Left ventricle myocardium inferior (tissue), 1 donor: ENCODE measurements at regions of chr1 and their contacts with region 1.

Region 1: GRCh38 chr1:9494929-9495758 is 44.1 kb upstream of the SLC25A33 start:
- DNase-seq: peak; percentile 47
- H3K4me3 ChIP-seq: peak overlapping the region; percentile 52
- H3K27ac ChIP-seq: no peak overlapping the region
- H3K4me1 ChIP-seq: peaks cover 11% of the 10 kb centered on the region
- H3K27me3 ChIP-seq: peaks cover 17% of the 10 kb centered on the region
- CTCF ChIP-seq: peak; percentile 98

Region 2: GRCh38 chr1:8970870-8971337 is 524.2 kb before region 1 on chr1:
- intact Hi-C with region 1: no loop called
- DNase-seq: no peak
- H3K4me3 ChIP-seq: no peak overlapping the region
- H3K27ac ChIP-seq: no peak overlapping the region
- H3K4me1 ChIP-seq: no peaks in the 10 kb centered on the region
- H3K27me3 ChIP-seq: no peaks in the 10 kb centered on the region
- CTCF ChIP-seq: no peak

Region 3: GRCh38 chr1:9289090-9289534 is 206.0 kb before region 1 on chr1:
- intact Hi-C with region 1: loop called (anchors 5 kb)
- DNase-seq: peak; percentile 48
- H3K4me3 ChIP-seq: no peak overlapping the region
- H3K27ac ChIP-seq: peak overlapping the region; percentile 79
- H3K4me1 ChIP-seq: peaks cover 41% of the 10 kb centered on the region
- H3K27me3 ChIP-seq: no peaks in the 10 kb centered on the region
- CTCF ChIP-seq: peak; percentile 90

Region 4: GRCh38 chr1:9438431-9439073 is 56.6 kb before region 1 on chr1:
- intact Hi-C with region 1: no loop called
- DNase-seq: peak; percentile 37
- H3K4me3 ChIP-seq: no peak overlapping the region
- H3K27ac ChIP-seq: peak overlapping the region; percentile 91
- H3K4me1 ChIP-seq: peaks cover 76% of the 10 kb centered on the region
- H3K27me3 ChIP-seq: no peaks in the 10 kb centered on the region
- CTCF ChIP-seq: no peak

Region 5: GRCh38 chr1:9573723-9574122 is 78.6 kb after region 1 on chr1:
- intact Hi-C with region 1: loop called (anchors 10 kb)
- DNase-seq: no peak
- H3K4me3 ChIP-seq: no peak overlapping the region
- H3K27ac ChIP-seq: no peak overlapping the region
- H3K4me1 ChIP-seq: peaks cover 5% of the 10 kb centered on the region
- H3K27me3 ChIP-seq: no peaks in the 10 kb centered on the region
- CTCF ChIP-seq: peak; percentile 54

Region 6: DNA sequence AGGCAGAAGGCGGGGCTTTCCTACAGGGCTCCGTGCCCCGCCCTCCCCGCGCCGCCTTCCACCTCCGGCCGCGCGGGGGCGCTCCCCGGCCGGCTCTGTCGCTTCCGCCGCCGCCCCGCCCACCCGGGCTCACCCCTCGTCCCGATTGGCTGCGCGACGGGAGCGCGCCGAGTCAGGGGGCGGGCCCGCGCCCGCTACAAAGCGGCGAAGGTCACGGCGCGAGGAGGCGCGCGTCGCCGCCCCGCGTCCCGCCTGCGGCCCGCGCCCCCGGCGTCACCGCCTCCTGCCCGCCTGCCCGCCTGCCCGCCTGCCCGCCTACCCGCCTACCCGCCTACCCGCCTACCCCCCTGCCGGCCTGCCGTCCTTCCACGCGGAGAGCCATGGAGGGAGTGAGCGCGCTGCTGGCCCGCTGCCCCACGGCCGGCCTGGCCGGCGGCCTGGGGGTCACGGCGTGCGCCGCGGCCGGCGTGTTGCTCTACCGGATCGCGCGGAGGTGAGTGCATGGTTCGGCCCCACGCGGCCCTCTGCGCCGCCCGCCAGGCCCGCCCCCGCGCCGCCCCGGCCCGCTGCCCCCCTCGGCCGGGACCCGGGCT is 93.5 kb after region 1 on chr1 and contains the start of gene TMEM201:
- intact Hi-C with region 1: no loop called
- DNase-seq: peak; percentile 96
- H3K4me3 ChIP-seq: peak within 1 kb of the TSS; percentile 76
- H3K27ac ChIP-seq: peak within 1 kb of the TSS; percentile 83
- H3K4me1 ChIP-seq: peaks cover 50% of the 10 kb centered on the region
- H3K27me3 ChIP-seq: no peaks in the 10 kb centered on the region
- CTCF ChIP-seq: peak; percentile 95
- total RNA-seq, gene TMEM201: 21.1 TPM